ENCODE measurements at regions of chr4 and their contacts with region 1.

Region 1: DNA sequence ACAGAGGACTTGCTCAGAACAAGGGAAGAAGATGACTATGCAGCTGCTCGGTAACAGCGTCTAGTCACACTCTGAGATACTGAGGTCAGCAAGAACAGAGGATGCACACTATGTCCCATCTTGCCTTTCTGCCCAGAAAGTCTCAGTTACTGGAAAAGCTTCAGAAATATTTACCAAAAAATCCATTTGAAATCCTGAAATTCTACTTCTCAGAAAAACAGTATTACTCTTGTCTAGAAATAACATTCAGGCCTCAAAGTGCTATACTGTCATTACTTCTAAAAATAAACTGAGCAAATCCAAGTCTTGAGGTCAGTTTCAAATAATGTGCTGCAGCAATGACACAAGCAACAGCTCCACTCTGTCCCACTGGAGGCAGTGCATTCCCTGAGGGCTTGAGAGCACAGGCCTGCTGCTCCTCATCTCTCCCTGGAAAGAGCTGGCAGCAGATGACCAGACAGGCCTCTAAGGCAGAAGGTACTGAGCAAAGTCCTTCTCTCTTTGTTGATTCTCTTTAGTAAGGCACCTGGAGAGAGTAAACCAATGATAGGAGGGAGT is 76.9 kb downstream of the CAMK2D start:
- DNase-seq: peak; percentile 71
- H3K4me3 Mint-ChIP-seq: peak overlapping the region; percentile 69
- H3K27ac Mint-ChIP-seq: peak overlapping the region; percentile 95
- H3K4me1 Mint-ChIP-seq: peaks cover 56% of the 10 kb centered on the region
- H3K27me3 Mint-ChIP-seq: no peaks in the 10 kb centered on the region

Region 2: GRCh38 chr4:113474017-113474416 is 210.6 kb before region 1 on chr4:
- intact Hi-C with region 1: loop called (anchors 1 kb)
- DNase-seq: no peak
- H3K4me3 Mint-ChIP-seq: no peak overlapping the region
- H3K27ac Mint-ChIP-seq: peak overlapping the region; percentile 79
- H3K4me1 Mint-ChIP-seq: peaks cover 27% of the 10 kb centered on the region
- H3K27me3 Mint-ChIP-seq: no peaks in the 10 kb centered on the region

Region 3: GRCh38 chr4:113623274-113623894 is 61.2 kb before region 1 on chr4:
- intact Hi-C with region 1: loop called (anchors 2 kb)
- DNase-seq: no peak
- H3K4me3 Mint-ChIP-seq: no peak overlapping the region
- H3K27ac Mint-ChIP-seq: no peak overlapping the region
- H3K4me1 Mint-ChIP-seq: peaks cover 27% of the 10 kb centered on the region
- H3K27me3 Mint-ChIP-seq: no peaks in the 10 kb centered on the region

Region 4: GRCh38 chr4:113732967-113733527 is 48.4 kb after region 1 on chr4:
- intact Hi-C with region 1: loop called (anchors 1 kb)
- DNase-seq: no peak
- H3K4me3 Mint-ChIP-seq: no peak overlapping the region
- H3K27ac Mint-ChIP-seq: peak overlapping the region; percentile 50
- H3K4me1 Mint-ChIP-seq: peaks cover 48% of the 10 kb centered on the region
- H3K27me3 Mint-ChIP-seq: no peaks in the 10 kb centered on the region

Region 5: DNA sequence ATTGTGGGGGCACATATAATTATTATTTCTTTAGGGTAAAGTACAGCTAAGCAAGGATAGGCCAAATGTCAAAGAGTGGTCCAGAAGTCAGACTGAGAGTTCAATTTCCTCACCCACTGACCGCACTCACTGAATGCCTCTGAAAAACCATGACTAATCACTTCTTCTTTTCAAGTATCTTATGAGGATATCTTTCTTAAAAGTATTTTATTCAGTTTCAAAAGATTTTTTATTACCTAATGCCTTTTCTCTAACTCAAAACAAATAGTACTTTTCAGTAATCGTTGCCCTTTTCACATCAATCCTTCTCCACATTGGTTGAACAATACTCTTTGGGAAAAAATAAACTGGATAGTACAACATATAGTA is 138.7 kb after region 1 on chr4:
- intact Hi-C with region 1: loop called (anchors 1 kb)
- DNase-seq: no peak
- H3K4me3 Mint-ChIP-seq: no peak overlapping the region
- H3K27ac Mint-ChIP-seq: no peak overlapping the region
- H3K4me1 Mint-ChIP-seq: peaks cover 24% of the 10 kb centered on the region
- H3K27me3 Mint-ChIP-seq: no peaks in the 10 kb centered on the region

Measured in activated CD4-positive, alpha-beta T cell treated with anti-CD3 and anti-CD28 coated beads, Interleukin-2, amount 10 ng/mL, durations not matched to agents 24 days and 14 days (primary cell).